GM10248 (cell line): ENCODE measurements at regions of chr5 and their contacts with region 1.

Region 1: GRCh38 chr5:82259172-82259800 is 18.9 kb downstream of the RPS23 start:
- DNase-seq: peak; percentile 24
- CTCF ChIP-seq: peak; percentile 48

Region 2: DNA sequence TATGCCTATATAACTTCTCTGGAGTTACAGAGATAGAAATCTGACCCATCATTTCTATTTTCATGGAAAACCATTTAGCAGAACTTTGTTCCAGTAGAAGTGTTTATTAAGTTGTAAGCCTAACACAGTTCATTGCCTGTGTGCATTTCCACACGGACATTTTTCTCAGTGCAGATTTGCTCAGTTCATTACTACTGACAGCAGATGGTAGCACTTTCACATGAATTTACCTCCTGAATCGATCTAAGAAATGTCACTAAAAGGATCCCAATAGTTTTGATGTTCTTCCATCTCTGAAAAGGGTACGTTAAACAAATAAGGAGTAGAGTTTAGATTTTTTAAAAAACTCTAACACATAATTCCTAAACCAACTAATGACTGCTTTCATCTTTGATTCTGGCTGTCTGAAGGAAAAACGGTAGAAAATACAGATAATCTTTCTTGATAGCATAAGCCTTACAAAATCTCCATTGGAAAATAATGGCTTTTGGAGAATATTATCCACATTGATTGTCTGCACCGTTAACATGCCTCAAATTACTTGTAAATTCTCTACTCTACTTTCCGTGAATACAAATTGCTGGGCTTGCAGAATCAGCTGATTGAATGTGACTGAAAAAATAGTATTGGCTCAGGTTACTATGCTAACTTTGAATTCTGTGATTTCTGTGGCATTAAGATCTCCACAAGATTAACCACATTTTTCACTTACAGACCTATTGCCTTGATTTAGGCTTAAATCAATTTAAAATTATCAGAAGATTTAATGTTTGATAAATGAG is 14.2 kb before region 1 on chr5:
- CTCF ChIA-PET with region 1: interaction called, 14 read pairs
- POLR2A ChIA-PET with region 1: no interaction called
- DNase-seq: no peak
- CTCF ChIP-seq: no peak

Region 3: DNA sequence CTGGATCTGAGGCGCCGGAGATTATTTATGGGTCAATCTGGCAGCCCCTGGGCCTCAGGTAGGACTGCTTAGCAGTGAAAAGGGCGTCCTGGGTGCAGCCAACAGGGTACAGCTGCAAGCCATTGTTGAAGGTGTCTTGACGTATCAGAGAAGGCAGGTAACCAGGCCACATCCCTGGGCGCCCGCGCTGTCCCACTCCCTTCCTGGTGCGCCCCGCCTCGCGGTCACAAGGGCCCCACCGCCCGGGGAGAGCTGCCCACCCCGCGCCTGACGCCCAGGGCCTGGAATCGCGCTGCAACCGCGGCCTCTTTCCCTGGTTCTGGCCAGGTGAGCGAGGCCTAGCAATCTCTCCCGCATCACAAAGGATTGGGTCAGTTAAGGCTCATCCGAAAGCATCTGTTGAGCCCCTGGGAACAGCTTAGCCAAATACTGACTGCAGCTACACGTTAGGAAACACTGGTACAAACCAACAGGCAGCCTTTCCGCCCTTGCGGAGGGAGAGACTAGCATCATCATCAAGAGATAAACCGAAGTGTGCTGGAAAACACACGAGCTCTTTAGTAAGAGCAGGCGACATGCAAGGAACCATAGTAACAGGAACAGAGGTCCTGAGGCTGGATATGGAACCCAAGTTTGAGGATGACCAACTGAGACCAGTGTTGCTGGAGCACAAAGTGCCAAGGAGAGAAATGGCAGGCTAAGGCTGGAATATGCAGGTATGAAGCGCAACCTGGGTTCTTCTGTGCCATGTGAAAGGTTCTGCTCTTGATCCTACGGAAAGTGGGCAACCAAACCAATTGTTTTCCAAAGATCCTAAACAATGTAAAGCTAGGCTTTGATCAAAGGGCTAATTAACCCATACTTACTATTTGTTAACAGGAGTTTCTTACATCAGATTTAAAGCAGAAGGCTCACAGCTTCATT is 15.3 kb after region 1 on chr5:
- CTCF ChIA-PET with region 1: interaction called, 16 read pairs
- POLR2A ChIA-PET with region 1: no interaction called
- DNase-seq: no peak
- CTCF ChIP-seq: no peak